ENCODE measurements at regions of chrX and their contacts with region 1.

Region 1: GRCh38 chrX:30635630-30636029 is 17.6 kb upstream of the GK start:
- DNase-seq: no peak

Region 2: DNA sequence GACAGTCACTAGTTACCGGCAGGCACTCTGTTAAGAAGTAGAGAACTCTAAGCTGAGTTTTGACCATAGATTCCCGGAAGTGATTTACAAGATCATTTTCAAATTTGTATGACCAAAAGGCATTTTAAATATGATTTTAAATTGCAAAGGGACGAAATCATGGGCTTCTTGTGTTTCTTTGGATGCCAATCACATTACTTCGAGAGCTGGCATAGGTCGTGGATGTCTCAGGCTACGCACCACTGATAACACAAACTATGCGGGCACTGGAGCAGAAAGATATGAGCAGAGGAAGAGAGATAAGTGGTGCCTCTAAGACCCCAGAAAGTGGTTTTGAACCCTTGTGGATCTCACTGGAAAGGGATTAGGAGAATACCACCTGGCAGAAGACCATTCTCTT is 730.4 kb after region 1 on chrX:
- intact Hi-C with region 1: no loop called
- DNase-seq: no peak

Region 3: GRCh38 chrX:31893525-31893924 is 1257.9 kb after region 1 on chrX:
- intact Hi-C with region 1: loop called in 1 of 2 experiments (anchors 5 kb)
- DNase-seq: no peak

Measured in posterior vena cava (tissue), 2 donors.